B cell (primary cell): ENCODE measurements at regions of chr1 and their contacts with region 1.

Region 1: DNA sequence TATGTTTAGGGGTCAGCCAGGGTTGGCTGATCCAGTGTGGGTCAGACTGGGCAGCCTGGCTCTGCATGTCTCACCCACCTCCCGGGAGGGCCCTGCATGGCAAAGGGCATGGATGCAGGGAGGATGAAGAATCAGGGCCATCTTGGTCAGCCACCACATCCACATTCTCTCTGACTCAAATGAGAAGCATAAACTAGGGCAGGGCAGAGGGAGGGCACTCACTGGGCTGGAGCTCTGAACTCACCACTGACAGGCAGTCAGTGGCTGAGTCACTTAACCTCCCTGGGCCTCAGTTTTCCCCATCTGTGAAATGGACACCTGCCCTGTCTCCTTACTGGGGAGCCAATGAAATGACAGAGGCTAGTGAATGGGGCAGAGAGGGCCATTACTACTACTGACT is 4.3 kb upstream of the CELA2A start:
- DNase-seq: no peak
- ATAC-seq: no peak
- H3K4me3 ChIP-seq: no peak overlapping the region
- H3K4me3 Mint-ChIP-seq: no peak overlapping the region
- H3K27ac ChIP-seq: no peak overlapping the region
- H3K27ac Mint-ChIP-seq: no peak overlapping the region
- H3K4me1 ChIP-seq: no peaks in the 10 kb centered on the region
- H3K4me1 Mint-ChIP-seq: no peaks in the 10 kb centered on the region
- H3K27me3 ChIP-seq: peaks cover 0 to 5% (median 1%) of the 10 kb centered on the region in 4 experiments
- H3K27me3 Mint-ChIP-seq: peaks cover 24% of the 10 kb centered on the region
- CTCF ChIP-seq: no peak

Region 2: DNA sequence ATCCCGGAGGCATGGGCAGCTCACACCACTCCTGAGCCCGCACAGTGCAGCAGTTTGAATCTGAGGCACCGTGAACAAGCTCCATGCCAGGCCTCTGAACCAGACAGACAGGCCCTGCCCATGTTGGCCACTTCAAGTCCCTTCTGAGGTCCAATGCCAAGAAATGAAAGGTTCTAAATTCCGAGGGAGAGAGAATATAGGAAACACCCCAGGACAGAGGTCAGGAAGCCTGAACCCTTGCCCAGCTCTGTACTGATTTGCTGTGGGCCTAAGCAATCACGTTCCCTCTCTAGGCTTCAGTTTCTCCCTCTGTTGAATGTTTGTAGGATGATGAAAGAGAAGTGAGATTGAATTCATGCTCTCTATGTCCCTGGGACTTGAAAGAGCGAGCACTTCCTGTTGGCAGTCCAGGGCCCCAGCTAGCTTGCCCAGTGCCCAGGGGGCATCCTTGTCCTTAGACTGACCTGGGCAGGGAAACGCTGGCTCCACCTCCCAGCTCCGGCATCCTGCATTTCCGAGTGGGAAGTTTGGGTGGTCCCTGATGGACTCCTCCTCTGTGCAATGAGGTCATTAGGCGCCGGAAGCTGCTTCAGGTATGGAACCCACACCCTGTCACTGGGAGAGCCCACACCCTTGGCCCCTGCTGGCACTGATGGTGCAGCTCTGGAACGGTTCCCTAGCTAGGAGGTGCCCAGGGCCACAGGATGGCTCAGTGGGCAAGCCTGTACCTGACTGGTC is 541.1 kb before region 1 on chr1:
- CTCF ChIA-PET with region 1: no interaction called
- POLR2A ChIA-PET with region 1: no interaction called
- intact Hi-C with region 1: no loop called
- DNase-seq: no peak
- ATAC-seq: no peak
- H3K4me3 ChIP-seq: no peak overlapping the region
- H3K4me3 Mint-ChIP-seq: no peak overlapping the region
- H3K27ac ChIP-seq: no peak overlapping the region
- H3K27ac Mint-ChIP-seq: no peak overlapping the region
- H3K4me1 ChIP-seq: no peaks in the 10 kb centered on the region
- H3K4me1 Mint-ChIP-seq: no peaks in the 10 kb centered on the region
- H3K27me3 ChIP-seq: no peaks in the 10 kb centered on the region
- H3K27me3 Mint-ChIP-seq: no peaks in the 10 kb centered on the region
- CTCF ChIP-seq: no peak

Region 3: GRCh38 chr1:15038232-15039016 is 413.8 kb before region 1 on chr1:
- CTCF ChIA-PET with region 1: no interaction called
- POLR2A ChIA-PET with region 1: no interaction called
- intact Hi-C with region 1: no loop called
- DNase-seq: no peak
- ATAC-seq: no peak
- H3K4me3 ChIP-seq: no peak overlapping the region
- H3K4me3 Mint-ChIP-seq: no peak overlapping the region
- H3K27ac ChIP-seq: no peak overlapping the region
- H3K27ac Mint-ChIP-seq: no peak overlapping the region
- H3K4me1 ChIP-seq: no peaks in the 10 kb centered on the region
- H3K4me1 Mint-ChIP-seq: peaks cover 5% of the 10 kb centered on the region
- H3K27me3 ChIP-seq: no peaks in the 10 kb centered on the region
- H3K27me3 Mint-ChIP-seq: no peaks in the 10 kb centered on the region
- CTCF ChIP-seq: no peak

Region 4: DNA sequence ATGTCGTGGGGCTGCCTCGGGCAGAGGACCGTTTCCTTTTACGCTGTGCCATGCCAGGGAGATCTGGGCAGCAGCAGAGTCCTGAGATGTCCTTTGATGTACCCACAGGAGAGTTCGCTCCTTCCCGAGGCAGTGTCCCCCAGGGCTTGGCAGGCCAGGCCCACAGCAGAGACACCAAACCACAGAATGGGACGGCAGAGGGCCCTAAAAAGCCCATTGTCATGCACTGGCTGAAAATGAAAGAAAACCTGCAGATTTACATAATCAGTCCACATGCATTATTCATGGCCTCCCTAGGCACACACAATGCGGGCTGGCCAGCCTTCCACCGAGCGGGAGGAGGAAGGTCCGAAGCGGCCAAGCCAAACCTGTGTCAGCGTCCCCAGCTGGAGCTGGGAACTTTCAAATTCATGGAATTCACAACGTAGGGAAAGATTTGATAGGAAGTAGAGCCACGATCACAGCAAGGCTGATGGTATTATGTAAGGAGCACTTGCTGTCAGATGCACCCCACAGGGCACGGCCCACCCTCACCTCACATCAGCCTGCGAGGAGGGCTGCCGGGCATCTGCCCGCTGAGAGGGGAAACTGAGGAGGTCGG is 67.8 kb before region 1 on chr1:
- CTCF ChIA-PET with region 1: no interaction called
- POLR2A ChIA-PET with region 1: interaction called, 10 read pairs
- intact Hi-C with region 1: no loop called
- DNase-seq: peak; percentile 49
- ATAC-seq: peak; percentile 53
- H3K4me3 ChIP-seq: peak overlapping the region in 3 of 5 experiments; percentile 8 to 31 (median 15)
- H3K4me3 Mint-ChIP-seq: peak overlapping the region; percentile 93
- H3K27ac ChIP-seq: no peak overlapping the region
- H3K27ac Mint-ChIP-seq: no peak overlapping the region
- H3K4me1 ChIP-seq: peaks cover 7 to 23% of the 10 kb centered on the region in 2 donors
- H3K4me1 Mint-ChIP-seq: peaks cover 24% of the 10 kb centered on the region
- H3K27me3 ChIP-seq: peaks cover 0 to 9% (median 7%) of the 10 kb centered on the region in 4 experiments
- H3K27me3 Mint-ChIP-seq: peaks cover 12% of the 10 kb centered on the region
- CTCF ChIP-seq: no peak

Region 5: GRCh38 chr1:15465674-15466073 is 13.5 kb after region 1 on chr1:
- CTCF ChIA-PET with region 1: no interaction called
- POLR2A ChIA-PET with region 1: no interaction called
- intact Hi-C with region 1: no loop called
- DNase-seq: no peak
- ATAC-seq: no peak
- H3K4me3 ChIP-seq: no peak overlapping the region
- H3K4me3 Mint-ChIP-seq: no peak overlapping the region
- H3K27ac ChIP-seq: no peak overlapping the region
- H3K27ac Mint-ChIP-seq: no peak overlapping the region
- H3K4me1 ChIP-seq: no peaks in the 10 kb centered on the region
- H3K4me1 Mint-ChIP-seq: no peaks in the 10 kb centered on the region
- H3K27me3 ChIP-seq: peaks cover 0 to 3% (median 0%) of the 10 kb centered on the region in 4 experiments
- H3K27me3 Mint-ChIP-seq: peaks cover 7% of the 10 kb centered on the region
- CTCF ChIP-seq: no peak

Region 6: DNA sequence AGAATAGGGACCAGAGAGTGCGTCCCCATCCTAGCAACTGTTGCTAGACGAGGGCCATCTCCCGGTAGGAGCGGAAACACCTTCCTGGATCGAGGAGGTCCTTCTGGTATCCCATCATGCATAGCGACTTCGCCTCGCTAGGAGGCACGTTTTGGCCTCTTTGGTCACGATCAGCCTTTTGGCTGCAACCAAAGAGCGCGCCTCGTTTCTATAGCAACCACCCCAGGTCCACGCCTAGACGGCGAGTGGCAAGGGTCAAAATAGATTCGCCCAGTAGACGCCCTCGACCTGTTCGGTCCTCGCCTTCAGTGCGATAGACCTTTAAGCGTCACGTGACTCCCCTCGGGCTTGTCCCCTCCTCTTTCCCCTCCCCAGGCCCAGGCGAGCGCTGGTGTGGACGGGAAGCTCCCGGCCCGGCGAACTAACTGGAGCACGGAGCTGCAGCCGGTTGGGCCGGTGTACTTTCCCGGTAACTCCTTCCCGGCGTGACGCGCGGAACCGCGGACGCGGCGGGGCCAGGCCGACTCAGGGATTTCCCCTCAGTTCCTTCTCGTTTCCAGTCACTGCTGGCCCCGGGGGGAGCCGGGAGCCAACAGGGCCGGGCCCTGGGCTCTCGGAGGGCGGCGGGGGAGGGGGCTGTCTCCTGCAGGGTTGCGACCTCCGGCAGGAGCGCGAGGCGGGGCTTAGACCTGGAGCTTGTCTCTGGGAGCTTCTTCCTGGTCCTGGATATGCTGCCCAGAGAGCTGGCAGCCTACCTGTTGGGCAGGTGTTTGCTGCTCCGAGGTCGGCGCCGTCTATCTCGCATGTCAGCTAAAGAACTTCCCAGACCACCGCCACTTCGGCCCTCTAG is 74.5 kb after region 1 on chr1 and contains the start of gene DNAJC16:
- CTCF ChIA-PET with region 1: no interaction called
- POLR2A ChIA-PET with region 1: no interaction called
- intact Hi-C with region 1: no loop called
- DNase-seq: peak; percentile 99
- ATAC-seq: peak; percentile 35
- H3K4me3 ChIP-seq: peak within 1 kb of the TSS; percentile 81 to 95 (median 86)
- H3K4me3 Mint-ChIP-seq: peak within 1 kb of the TSS; percentile 89
- H3K27ac ChIP-seq: peak within 1 kb of the TSS; percentile 99
- H3K27ac Mint-ChIP-seq: peak within 1 kb of the TSS; percentile 99
- H3K4me1 ChIP-seq: peaks cover 28 to 34% of the 10 kb centered on the region in 2 donors
- H3K4me1 Mint-ChIP-seq: peaks cover 59% of the 10 kb centered on the region
- H3K27me3 ChIP-seq: no peaks in the 10 kb centered on the region
- H3K27me3 Mint-ChIP-seq: no peaks in the 10 kb centered on the region
- CTCF ChIP-seq: no peak
- total RNA-seq, gene DNAJC16: 41.2 and 47.1 TPM in 2 replicates